ENCODE measurements at regions of chr11 and their contacts with region 1.

Region 1: GRCh38 chr11:93895106-93895862 is 44.9 kb upstream of the VSTM5 start:
- DNase-seq: no peak
- H3K4me3 ChIP-seq: no peak overlapping the region
- H3K27ac ChIP-seq: no peak overlapping the region
- H3K4me1 ChIP-seq: no peaks in the 10 kb centered on the region
- H3K27me3 ChIP-seq: no peaks in the 10 kb centered on the region
- CTCF ChIP-seq: peak; percentile 46 to 89 (median 69)

Region 2: GRCh38 chr11:94002226-94002625 is 106.9 kb after region 1 on chr11:
- intact Hi-C with region 1: no loop called
- DNase-seq: no peak
- H3K4me3 ChIP-seq: no peak overlapping the region
- H3K27ac ChIP-seq: no peak overlapping the region
- H3K4me1 ChIP-seq: no peaks in the 10 kb centered on the region
- H3K27me3 ChIP-seq: no peaks in the 10 kb centered on the region
- CTCF ChIP-seq: no peak

Region 3: GRCh38 chr11:94504689-94505293 is 609.5 kb after region 1 on chr11:
- intact Hi-C with region 1: loop called (anchors 2 kb)
- DNase-seq: no peak
- H3K4me3 ChIP-seq: no peak overlapping the region
- H3K27ac ChIP-seq: no peak overlapping the region
- H3K4me1 ChIP-seq: no peaks in the 10 kb centered on the region
- H3K27me3 ChIP-seq: no peaks in the 10 kb centered on the region
- CTCF ChIP-seq: peak; percentile 36 to 55 (median 41)